PC-3 (cell line): ENCODE measurements at regions of chr10 and their contacts with region 1.

Region 1: GRCh38 chr10:43048574-43049339 is 28.1 kb upstream of the RET start:
- DNase-seq: no peak
- ATAC-seq: no peak
- H3K4me3 ChIP-seq: no peak overlapping the region
- H3K27ac ChIP-seq: no peak overlapping the region
- H3K4me1 ChIP-seq: no peaks in the 10 kb centered on the region
- H3K27me3 ChIP-seq: peaks cover 36% of the 10 kb centered on the region
- CTCF ChIP-seq: no peak

Region 2: GRCh38 chr10:42987121-42987541 is 61.6 kb before region 1 on chr10:
- CTCF ChIA-PET with region 1: no interaction called
- POLR2A ChIA-PET with region 1: no interaction called
- intact Hi-C with region 1: loop called (anchors 2 kb)
- DNase-seq: no peak
- ATAC-seq: no peak
- H3K4me3 ChIP-seq: no peak overlapping the region
- H3K27ac ChIP-seq: no peak overlapping the region
- H3K4me1 ChIP-seq: no peaks in the 10 kb centered on the region
- H3K27me3 ChIP-seq: 0 out of 2 replicates have a peak, but pooled peaks cover 3% of the 10 kb centered on the region
- CTCF ChIP-seq: no peak

Region 3: GRCh38 chr10:43128958-43129706 is 80.4 kb after region 1 on chr10:
- CTCF ChIA-PET with region 1: no interaction called
- POLR2A ChIA-PET with region 1: no interaction called
- intact Hi-C with region 1: no loop called
- DNase-seq: peak; percentile 84
- ATAC-seq: peak; percentile 93
- H3K4me3 ChIP-seq: no peak overlapping the region
- H3K27ac ChIP-seq: 0 out of 2 replicates have a peak overlapping the region, but pooled peaks have one; percentile 10
- H3K4me1 ChIP-seq: peaks cover 20% of the 10 kb centered on the region
- H3K27me3 ChIP-seq: no peaks in the 10 kb centered on the region
- CTCF ChIP-seq: peak; percentile 21; the same call in 1 of the 2 replicates